GM13976 (cell line): ENCODE measurements at regions of chr4 and their contacts with region 1.

Region 1: DNA sequence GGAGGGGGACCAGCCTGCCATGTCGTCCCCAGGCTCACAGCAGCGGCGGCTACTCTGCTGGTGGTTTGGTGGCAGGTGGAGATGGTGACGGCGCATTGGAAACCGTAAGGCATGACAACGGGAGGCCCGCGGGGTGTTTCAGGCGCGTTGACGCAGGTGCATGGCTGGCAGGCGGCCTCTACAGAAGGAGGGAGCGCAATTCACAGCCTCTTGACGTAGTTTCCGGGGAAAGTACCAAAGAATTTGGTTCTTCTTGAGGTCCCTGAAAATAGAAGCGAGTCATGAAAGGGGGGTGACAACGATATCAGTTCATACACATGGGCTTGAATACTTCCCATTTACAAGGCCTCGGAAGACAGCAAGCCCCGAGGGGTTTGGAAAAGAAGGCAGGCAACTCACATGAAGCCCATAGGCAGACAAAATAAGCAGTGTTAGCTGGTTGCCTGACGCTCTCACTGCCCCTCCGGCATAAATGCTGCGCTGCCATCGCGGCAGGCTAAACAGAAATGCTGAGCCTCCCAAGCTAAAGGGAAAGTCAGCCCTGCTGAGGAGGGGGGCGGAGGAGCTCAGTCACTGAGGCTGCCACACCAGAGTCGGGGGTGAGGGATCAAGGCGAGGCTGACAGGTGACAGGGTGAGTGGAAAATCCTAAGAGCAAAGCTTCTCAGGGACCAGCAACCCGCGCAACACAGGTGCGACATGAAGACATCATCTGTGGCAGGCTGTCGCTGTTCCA is 52.3 kb upstream of the PDLIM3 start:
- DNase-seq: peak; percentile 87
- CTCF ChIP-seq: no peak

Region 2: DNA sequence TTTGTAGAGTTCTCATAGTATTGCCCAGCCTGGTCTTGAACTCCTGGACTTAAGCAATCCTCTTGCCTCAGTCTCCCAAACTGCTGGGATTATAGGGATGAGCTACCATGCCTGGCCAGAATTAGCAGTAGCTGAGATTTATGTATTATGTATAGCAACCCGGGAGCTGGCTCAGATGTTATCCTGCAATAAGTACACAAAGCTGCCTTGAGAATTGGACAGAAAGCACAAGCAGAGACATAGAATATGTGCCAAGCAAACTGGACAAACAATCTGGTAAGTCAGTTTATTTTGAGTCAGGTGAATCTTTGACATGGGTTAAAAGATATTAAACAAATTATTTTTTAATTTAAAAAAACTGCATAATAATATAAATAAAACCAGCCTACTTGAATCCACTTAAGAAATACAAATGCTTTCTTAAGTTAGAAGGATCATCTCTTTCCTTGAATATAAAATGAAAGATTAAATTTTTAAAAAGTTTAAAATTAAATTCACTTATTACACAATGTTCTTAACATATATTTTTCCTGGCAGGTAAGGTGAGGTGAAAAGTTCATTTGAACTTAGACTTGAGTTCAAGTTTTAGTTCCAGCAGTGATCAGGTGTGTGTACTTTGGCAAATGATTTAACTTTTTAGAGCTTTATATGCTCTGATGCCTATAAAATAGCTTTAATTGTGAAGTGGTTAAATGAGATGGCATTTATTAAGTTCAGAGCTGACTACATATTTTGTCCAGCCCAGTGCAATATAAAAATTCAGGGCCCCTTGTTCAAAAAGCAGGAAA is 674.0 kb before region 1 on chr4:
- in situ Hi-C with region 1: no loop called
- DNase-seq: no peak
- CTCF ChIP-seq: no peak

Region 3: GRCh38 chr4:185332575-185333464 is 254.8 kb before region 1 on chr4:
- in situ Hi-C with region 1: no loop called
- DNase-seq: peak; percentile 32
- CTCF ChIP-seq: no peak

Region 4: GRCh38 chr4:185471235-185472102 is 116.1 kb before region 1 on chr4 and contains the start of gene CCDC110:
- in situ Hi-C with region 1: loop called (anchors 5 kb)
- DNase-seq: peak; percentile 100
- CTCF ChIP-seq: peak; percentile 96